Prostate gland (tissue), 2 donors: ENCODE measurements at regions of chrX and their contacts with region 1.

Region 1: GRCh38 chrX:70433848-70434351 is 10.7 kb upstream of the DLG3 start:
- DNase-seq: peak; percentile 55
- H3K4me3 ChIP-seq: peak overlapping the region; percentile 42 to 44
- H3K27ac ChIP-seq: peak overlapping the region; percentile 74 to 77
- H3K4me1 ChIP-seq: no peaks in the 10 kb centered on the region
- H3K27me3 ChIP-seq: no peaks in the 10 kb centered on the region
- CTCF ChIP-seq: peak; percentile 25 to 79 (median 67)
- POLR2A ChIP-seq: no peak

Region 2: DNA sequence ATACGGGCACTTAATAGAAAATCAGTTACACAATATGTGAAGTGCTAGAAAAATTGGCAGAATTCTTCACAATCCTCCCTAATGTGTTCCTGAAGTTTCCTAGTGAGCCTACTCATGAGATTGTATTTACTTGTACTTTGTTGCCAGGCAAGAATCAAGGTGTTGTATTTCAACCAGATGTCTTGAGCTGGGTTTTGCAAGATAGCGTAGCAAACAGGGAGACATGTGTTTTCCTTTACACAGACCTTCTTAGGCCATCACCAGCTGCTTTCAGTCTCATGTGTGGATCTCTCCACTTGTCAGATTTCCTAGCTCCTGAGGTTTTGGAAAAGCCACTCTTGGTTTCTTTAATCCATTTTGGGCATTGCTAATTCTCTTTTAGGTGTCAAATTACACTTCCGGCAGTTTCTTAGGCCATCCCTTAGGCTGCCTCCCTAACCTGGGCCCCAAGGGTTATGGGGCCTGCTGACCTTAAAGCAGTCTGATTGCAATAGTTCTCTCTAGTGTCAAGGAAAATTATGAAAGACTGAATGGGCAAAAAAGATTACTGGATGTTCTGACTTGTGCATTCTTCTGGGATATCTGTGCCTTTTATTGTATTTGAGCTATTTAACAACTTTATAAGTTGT is 830.2 kb before region 1 on chrX:
- intact Hi-C with region 1: no loop called
- DNase-seq: no peak
- H3K4me3 ChIP-seq: no peak overlapping the region
- H3K27ac ChIP-seq: no peak overlapping the region
- H3K4me1 ChIP-seq: no peaks in the 10 kb centered on the region
- H3K27me3 ChIP-seq: no peaks in the 10 kb centered on the region
- CTCF ChIP-seq: no peak
- POLR2A ChIP-seq: no peak

Region 3: GRCh38 chrX:70133303-70134115 is 300.4 kb before region 1 on chrX and contains the start of gene IGBP1:
- intact Hi-C with region 1: loop called (anchors 5 kb)
- DNase-seq: peak; percentile 79
- H3K4me3 ChIP-seq: peak within 1 kb of the TSS; percentile 52
- H3K27ac ChIP-seq: peak within 1 kb of the TSS; percentile 75 to 76
- H3K4me1 ChIP-seq: no peaks in the 10 kb centered on the region
- H3K27me3 ChIP-seq: no peaks in the 10 kb centered on the region
- CTCF ChIP-seq: peak; percentile 26 to 62 (median 51)
- POLR2A ChIP-seq: no peak
- total RNA-seq, gene IGBP1: 54.9 to 62.6 TPM

Region 4: GRCh38 chrX:70196961-70197805 is 236.7 kb before region 1 on chrX:
- intact Hi-C with region 1: loop called (anchors 10 kb)
- DNase-seq: peak; percentile 36
- H3K4me3 ChIP-seq: no peak overlapping the region
- H3K27ac ChIP-seq: no peak overlapping the region
- H3K4me1 ChIP-seq: no peaks in the 10 kb centered on the region
- H3K27me3 ChIP-seq: no peaks in the 10 kb centered on the region
- CTCF ChIP-seq: peak; percentile 23 to 56 (median 48)
- POLR2A ChIP-seq: no peak